ENCODE measurements at regions of chr18 and their contacts with region 1.

Region 1: DNA sequence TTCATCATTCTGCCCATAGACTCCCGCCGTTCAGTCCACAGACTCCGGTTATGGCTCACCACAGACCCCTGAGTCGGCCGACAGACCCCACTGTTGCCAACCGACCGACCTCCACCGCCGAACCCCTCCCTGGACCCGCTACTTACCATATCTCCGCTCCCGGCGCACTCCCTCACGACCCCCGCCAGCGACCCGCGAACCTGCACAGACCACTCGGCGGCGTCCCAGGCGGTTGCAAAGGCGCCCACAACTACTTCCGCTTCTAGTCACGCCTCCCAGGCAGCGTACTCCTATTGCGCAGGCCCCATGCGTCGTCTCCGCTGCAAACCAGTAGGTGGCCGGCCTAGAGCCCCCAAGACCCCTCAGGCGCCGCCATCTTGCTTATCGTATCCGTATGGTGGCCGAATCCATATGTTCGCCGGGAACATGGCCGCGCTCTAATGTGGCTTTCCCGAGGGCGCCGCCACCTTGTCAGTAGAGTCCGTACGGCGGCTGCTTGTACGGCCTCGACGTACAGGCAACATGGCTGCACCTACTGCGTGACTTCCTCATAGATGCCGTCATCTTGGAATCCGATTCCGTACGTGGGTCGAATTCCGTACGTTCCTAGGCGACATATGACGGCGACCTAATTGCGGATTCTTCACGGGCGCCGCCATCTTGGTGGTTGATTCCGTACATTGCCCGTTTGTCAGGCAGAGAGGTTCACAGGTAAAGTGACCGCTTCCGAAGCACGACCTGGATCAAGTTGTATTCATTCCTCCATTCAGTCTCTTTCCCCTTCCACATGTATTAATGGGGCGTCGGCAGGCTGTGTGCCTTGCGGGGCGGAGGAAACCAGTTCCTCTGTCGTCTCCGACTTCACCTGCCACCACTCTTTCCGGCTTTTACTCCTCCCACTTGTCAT is at the start of gene CXXC1:
- DNase-seq: peak; percentile 94 to 99
- ATAC-seq: peak; percentile 89 to 97 (median 89)
- H3K4me3 ChIP-seq: peak within 1 kb of the TSS; percentile 87
- H3K4me3 Mint-ChIP-seq: peak within 1 kb of the TSS; percentile 96
- H3K27ac ChIP-seq: peak within 1 kb of the TSS; percentile 93
- H3K27ac Mint-ChIP-seq: peak within 1 kb of the TSS; percentile 93 to 96
- H3K4me1 ChIP-seq: peaks cover 24% of the 10 kb centered on the region
- H3K4me1 Mint-ChIP-seq: peaks cover 22 to 48% of the 10 kb centered on the region in 2 donors
- H3K27me3 ChIP-seq: no peaks in the 10 kb centered on the region
- H3K27me3 Mint-ChIP-seq: no peaks in the 10 kb centered on the region
- CTCF ChIP-seq: peak; percentile 31
- total RNA-seq, gene CXXC1: 146 to 173 (median 153) TPM

Region 2: DNA sequence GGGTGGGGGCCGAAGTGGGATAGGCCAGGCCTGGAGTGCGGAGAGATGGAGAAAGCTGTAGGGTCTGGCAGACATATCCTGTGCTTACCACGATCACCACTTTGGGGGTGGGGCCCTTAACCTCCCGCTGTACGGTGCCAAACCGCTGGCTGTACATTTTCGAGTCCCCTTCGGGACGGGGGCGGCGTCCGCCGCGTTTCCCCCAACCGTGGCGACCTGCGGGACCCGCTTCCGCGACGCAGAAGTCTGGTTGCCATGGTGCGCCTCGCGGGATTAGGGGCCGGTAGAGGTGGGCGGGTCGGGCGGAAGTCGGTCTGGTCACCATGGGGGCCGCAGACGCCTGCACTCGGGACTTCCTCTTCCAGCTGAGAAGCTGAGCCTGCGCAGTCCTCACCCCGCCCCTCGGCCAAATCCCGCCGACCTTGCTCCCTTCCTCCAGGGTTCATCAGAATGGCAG is 21.4 kb before region 1 on chr18 and contains the start of gene CFAP53:
- intact Hi-C with region 1: loop called (anchors 1 kb)
- DNase-seq: peak; percentile 83 to 89
- ATAC-seq: peak; percentile 88 to 94 (median 89)
- H3K4me3 ChIP-seq: peak within 1 kb of the TSS; percentile 53
- H3K4me3 Mint-ChIP-seq: peak within 1 kb of the TSS; percentile 91
- H3K27ac ChIP-seq: peak within 1 kb of the TSS; percentile 75
- H3K27ac Mint-ChIP-seq: peak within 1 kb of the TSS; percentile 89 to 93
- H3K4me1 ChIP-seq: peaks cover 28% of the 10 kb centered on the region
- H3K4me1 Mint-ChIP-seq: peaks cover 21 to 27% of the 10 kb centered on the region in 2 donors
- H3K27me3 ChIP-seq: no peaks in the 10 kb centered on the region
- H3K27me3 Mint-ChIP-seq: peaks cover 3 to 7% of the 10 kb centered on the region in 2 donors
- CTCF ChIP-seq: no peak
- total RNA-seq, gene CFAP53: 0.20 to 0.24 (median 0.20) TPM

Region 3: GRCh38 chr18:50276452-50276851 is 11.2 kb before region 1 on chr18:
- intact Hi-C with region 1: no loop called
- DNase-seq: no peak
- ATAC-seq: no peak
- H3K4me3 ChIP-seq: no peak overlapping the region
- H3K4me3 Mint-ChIP-seq: no peak overlapping the region
- H3K27ac ChIP-seq: no peak overlapping the region
- H3K27ac Mint-ChIP-seq: no peak overlapping the region
- H3K4me1 ChIP-seq: peaks cover 26% of the 10 kb centered on the region
- H3K4me1 Mint-ChIP-seq: peaks cover 25 to 48% of the 10 kb centered on the region in 2 donors
- H3K27me3 ChIP-seq: no peaks in the 10 kb centered on the region
- H3K27me3 Mint-ChIP-seq: no peaks in the 10 kb centered on the region
- CTCF ChIP-seq: no peak

Region 4: DNA sequence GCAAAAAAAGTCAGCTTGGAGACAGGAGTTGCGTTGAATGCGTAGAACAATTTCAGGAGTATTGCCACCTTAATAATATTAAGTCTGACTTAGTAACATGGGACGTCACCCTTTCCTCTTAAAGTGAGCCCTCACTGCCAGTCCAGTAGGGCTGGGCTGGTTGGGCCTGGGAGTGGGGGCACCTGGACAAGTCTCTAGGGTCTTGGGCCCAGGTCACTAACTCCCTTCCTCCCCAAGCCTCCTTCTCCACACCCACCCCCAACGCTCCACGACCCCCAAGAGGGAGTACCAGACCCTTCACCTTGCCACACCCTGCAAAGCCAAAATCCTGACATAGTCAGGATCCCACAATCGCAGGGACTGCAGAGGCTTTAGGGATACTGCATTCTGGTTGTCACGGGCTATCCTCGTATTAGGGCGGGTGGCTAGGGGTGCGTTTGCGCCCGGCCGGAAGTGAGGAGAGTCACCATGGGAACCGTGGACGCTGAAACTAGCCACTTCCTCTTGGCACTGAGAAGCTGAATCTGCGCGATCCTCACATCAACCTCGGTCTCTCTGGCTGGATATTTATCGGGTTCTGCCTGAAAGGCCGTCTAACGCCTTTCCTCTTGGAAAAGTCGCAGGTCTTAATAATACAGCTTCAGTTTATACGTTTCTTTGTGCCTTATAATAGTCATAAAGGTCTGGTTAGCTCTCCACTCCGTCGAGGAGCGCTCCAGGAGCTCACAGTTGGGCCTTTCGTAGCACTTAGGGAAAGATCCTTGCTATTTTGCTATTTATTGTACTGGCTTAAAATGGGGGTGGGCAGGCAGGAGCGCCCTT is 10.1 kb after region 1 on chr18:
- intact Hi-C with region 1: loop called (anchors 1 kb)
- DNase-seq: peak; percentile 68 to 83
- ATAC-seq: peak; percentile 91 to 100 (median 100)
- H3K4me3 ChIP-seq: peak overlapping the region; percentile 23
- H3K4me3 Mint-ChIP-seq: peak overlapping the region; percentile 78
- H3K27ac ChIP-seq: no peak overlapping the region
- H3K27ac Mint-ChIP-seq: peak overlapping the region in 1 of 2 donors; percentile 68
- H3K4me1 ChIP-seq: peaks cover 16% of the 10 kb centered on the region
- H3K4me1 Mint-ChIP-seq: peaks cover 7 to 8% of the 10 kb centered on the region in 2 donors
- H3K27me3 ChIP-seq: peaks cover 7% of the 10 kb centered on the region
- H3K27me3 Mint-ChIP-seq: peaks cover 21 to 40% of the 10 kb centered on the region in 2 donors
- CTCF ChIP-seq: no peak

Region 5: GRCh38 chr18:50307738-50308470 is 20.2 kb after region 1 on chr18:
- intact Hi-C with region 1: loop called (anchors 1 kb)
- DNase-seq: peak; percentile 70 to 96
- ATAC-seq: peak; percentile 95 to 100 (median 98)
- H3K4me3 ChIP-seq: peak overlapping the region; percentile 42
- H3K4me3 Mint-ChIP-seq: peak overlapping the region; percentile 94
- H3K27ac ChIP-seq: no peak overlapping the region
- H3K27ac Mint-ChIP-seq: peak overlapping the region; percentile 46 to 73
- H3K4me1 ChIP-seq: peaks cover 16% of the 10 kb centered on the region
- H3K4me1 Mint-ChIP-seq: peaks cover 11 to 17% of the 10 kb centered on the region in 2 donors
- H3K27me3 ChIP-seq: no peaks in the 10 kb centered on the region
- H3K27me3 Mint-ChIP-seq: peaks cover 17 to 40% of the 10 kb centered on the region in 2 donors
- CTCF ChIP-seq: no peak

Region 6: DNA sequence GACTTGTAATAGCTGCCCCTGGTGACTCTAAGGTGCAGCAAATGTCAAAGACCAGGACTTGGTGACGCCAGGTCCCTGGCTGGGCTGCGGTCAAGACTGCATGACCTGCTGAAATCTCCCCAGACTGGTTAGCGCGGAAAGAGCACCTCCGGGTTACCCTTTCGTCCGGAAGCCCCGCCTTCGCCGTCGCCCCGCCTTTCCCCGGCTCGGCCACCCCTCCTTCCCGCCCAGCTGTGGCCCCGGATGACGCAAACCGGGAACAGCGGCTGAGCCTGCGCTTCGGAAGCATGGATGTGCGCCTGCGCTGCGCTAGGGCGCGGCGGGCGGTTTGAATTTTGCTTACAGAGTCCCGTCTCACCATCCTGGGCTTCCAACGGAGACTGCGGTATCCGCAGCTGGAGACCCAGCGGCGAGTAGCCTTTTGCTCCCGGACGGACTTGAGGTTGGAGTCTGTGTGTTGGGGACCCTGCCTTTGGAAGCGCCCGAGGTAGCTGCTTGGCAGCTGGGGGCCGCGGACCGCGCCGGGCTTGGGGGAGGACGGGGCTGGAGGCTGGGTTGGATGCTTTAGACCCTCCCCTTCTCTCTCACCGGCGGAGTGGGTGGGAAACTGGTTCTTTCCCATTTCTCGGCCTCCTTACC is 87.2 kb after region 1 on chr18 and contains the start of gene SKA1:
- intact Hi-C with region 1: loop called (anchors 1 kb)
- DNase-seq: peak; percentile 87 to 97
- ATAC-seq: peak; percentile 99
- H3K4me3 ChIP-seq: peak within 1 kb of the TSS; percentile 53
- H3K4me3 Mint-ChIP-seq: peak within 1 kb of the TSS; percentile 84
- H3K27ac ChIP-seq: peak within 1 kb of the TSS; percentile 76
- H3K27ac Mint-ChIP-seq: peak within 1 kb of the TSS; percentile 84 to 86
- H3K4me1 ChIP-seq: peaks cover 9% of the 10 kb centered on the region
- H3K4me1 Mint-ChIP-seq: peaks cover 13 to 17% of the 10 kb centered on the region in 2 donors
- H3K27me3 ChIP-seq: peaks cover 4% of the 10 kb centered on the region
- H3K27me3 Mint-ChIP-seq: peaks cover 7 to 12% of the 10 kb centered on the region in 2 donors
- CTCF ChIP-seq: no peak
- total RNA-seq, gene SKA1: 1.1 to 1.2 (median 1.2) TPM

Region 7: GRCh38 chr18:50967714-50968661 is 680.3 kb after region 1 on chr18 and contains the start of gene ELAC1:
- intact Hi-C with region 1: loop called (anchors 10 kb)
- DNase-seq: peak; percentile 71 to 82
- ATAC-seq: peak; percentile 91 to 96 (median 93)
- H3K4me3 ChIP-seq: peak within 1 kb of the TSS; percentile 63
- H3K4me3 Mint-ChIP-seq: peak within 1 kb of the TSS; percentile 91
- H3K27ac ChIP-seq: peak within 1 kb of the TSS; percentile 83
- H3K27ac Mint-ChIP-seq: peak within 1 kb of the TSS; percentile 58 to 73
- H3K4me1 ChIP-seq: peaks cover 7% of the 10 kb centered on the region
- H3K4me1 Mint-ChIP-seq: peaks cover 17 to 25% of the 10 kb centered on the region in 2 donors
- H3K27me3 ChIP-seq: no peaks in the 10 kb centered on the region
- H3K27me3 Mint-ChIP-seq: no peaks in the 10 kb centered on the region
- CTCF ChIP-seq: no peak
- total RNA-seq, gene ELAC1: 7.9 to 10.0 (median 8.9) TPM